Endothelial cell of umbilical vein (primary cell): ENCODE measurements at regions of chr1 and their contacts with region 1.

Region 1: DNA sequence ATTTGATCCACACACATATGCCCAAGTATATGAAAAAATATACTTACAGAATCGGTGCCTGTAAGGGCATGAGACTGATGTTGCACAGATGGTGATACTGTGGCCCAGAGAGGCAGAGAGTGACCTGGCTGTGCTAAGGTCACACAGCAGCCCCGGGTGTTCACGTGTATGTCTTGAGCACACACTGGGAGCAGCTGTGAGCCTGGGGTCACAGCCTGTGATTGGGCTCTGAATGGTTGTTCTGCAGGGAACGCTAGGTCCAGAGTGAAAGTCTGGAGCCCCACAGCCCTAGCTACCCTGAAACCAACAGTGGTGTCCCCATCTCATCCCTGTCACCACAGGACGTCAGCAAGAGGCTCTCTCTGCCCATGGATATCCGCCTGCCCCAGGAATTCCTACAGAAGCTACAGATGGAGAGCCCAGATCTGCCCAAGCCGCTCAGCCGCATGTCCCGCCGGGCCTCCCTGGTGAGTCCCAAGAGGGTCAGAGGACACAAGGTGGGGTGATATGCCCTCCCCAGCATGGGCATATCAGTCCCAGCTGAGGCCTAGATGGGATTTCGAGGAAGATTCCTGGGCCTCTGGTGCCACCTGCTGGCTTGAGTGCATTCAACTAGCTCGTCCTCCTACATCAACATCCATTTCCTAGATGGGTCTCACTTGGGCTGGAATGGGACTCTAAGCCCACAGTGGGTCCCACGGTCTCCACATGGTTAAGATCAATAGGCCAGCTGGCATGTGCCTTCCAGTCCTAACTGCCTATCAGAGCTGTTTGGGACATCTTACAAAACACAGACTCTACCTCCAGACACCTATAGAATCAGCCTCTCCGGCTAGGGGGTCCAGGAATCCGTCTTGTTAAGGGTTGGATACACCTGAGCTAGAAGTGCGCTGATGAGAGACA is 19.7 kb downstream of the CDK18 start:
- DNase-seq: peak; percentile 62
- H3K4me3 ChIP-seq: no peak overlapping the region
- H3K27ac ChIP-seq: no peak overlapping the region
- H3K4me1 ChIP-seq: no peaks in the 10 kb centered on the region
- H3K27me3 ChIP-seq: peaks cover 0 to 4% of the 10 kb centered on the region in 2 experiments
- CTCF ChIP-seq: peak; percentile 70 to 80
- POLR2A ChIP-seq: no peak

Region 2: DNA sequence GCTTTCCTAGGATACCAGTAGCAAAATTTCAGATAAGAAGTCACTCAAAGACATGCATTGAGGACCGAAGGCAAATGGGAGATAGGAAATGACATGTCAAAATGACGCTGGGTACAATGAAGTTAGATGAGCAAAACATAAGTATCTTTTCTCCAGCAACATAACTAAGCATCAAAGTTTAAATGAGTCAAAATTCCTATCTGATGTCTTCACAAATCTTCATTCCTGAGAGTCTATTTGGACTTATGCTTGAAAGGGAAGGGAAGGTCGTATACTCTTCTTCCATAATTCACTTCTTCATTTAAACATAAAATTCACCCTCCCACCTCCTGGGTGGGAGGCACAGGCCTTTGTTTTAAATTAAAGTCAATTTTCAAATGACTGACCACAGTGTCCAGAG is 435.8 kb before region 1 on chr1:
- CTCF ChIA-PET with region 1: no interaction called
- POLR2A ChIA-PET with region 1: no interaction called
- dilution Hi-C with region 1: no loop called
- intact Hi-C with region 1: no loop called
- DNase-seq: no peak
- H3K4me3 ChIP-seq: no peak overlapping the region
- H3K27ac ChIP-seq: no peak overlapping the region
- H3K4me1 ChIP-seq: no peaks in the 10 kb centered on the region
- H3K27me3 ChIP-seq: no peaks in the 10 kb centered on the region
- CTCF ChIP-seq: no peak
- POLR2A ChIP-seq: no peak

Region 3: DNA sequence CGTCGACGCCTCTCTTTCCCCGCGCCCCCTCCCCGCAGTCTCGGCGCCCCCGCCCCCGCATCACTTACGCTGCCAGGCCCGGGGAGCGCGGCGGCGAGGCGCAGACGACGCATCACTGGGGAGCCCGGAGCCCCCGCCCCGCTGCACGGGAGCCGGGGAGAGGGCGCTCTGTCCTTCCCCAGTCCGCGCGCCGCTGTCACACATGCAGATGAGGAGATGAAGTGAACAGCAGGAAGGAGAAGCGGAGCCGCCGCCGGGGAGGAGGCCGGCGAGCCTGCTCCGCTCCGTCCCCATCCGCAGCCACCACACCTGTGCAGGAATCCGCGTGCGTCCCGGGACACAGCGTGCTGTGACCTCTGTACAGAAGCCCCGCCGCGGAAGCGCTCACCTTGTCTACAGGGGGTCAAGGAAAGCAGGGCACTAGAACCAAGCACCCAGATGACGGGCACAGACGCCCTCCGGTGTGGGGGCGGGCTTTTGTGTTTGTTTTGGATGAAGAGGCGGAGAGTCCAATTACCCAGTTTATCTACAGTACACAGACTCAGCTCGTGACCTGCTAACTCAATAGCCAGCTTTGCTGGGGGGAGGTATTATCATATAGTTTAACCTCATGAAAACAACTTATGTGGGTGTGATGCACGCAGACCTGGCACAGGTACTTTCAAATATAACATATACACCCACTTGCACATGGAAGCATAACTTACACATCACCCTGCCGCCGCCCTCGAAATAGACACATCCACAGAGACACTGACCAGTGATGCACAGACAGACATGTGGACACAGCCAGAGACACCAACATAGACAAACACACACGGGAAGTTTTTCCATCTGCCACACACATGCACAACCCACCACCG is 179.8 kb before region 1 on chr1:
- CTCF ChIA-PET with region 1: interaction called, 24 read pairs
- POLR2A ChIA-PET with region 1: no interaction called
- dilution Hi-C with region 1: no loop called
- intact Hi-C with region 1: no loop called
- DNase-seq: no peak
- H3K4me3 ChIP-seq: no peak overlapping the region
- H3K27ac ChIP-seq: no peak overlapping the region
- H3K4me1 ChIP-seq: no peaks in the 10 kb centered on the region
- H3K27me3 ChIP-seq: peaks cover 53 to 70% of the 10 kb centered on the region in 2 experiments
- CTCF ChIP-seq: no peak
- POLR2A ChIP-seq: no peak

Region 4: GRCh38 chr1:205430696-205431305 is 93.3 kb before region 1 on chr1:
- CTCF ChIA-PET with region 1: interaction called, 11 read pairs
- POLR2A ChIA-PET with region 1: no interaction called
- dilution Hi-C with region 1: no loop called
- intact Hi-C with region 1: loop called (anchors 5 kb)
- DNase-seq: peak; percentile 59
- H3K4me3 ChIP-seq: peak overlapping the region; percentile 18 to 51 (median 34)
- H3K27ac ChIP-seq: no peak overlapping the region
- H3K4me1 ChIP-seq: no peaks in the 10 kb centered on the region
- H3K27me3 ChIP-seq: peaks cover 12 to 19% of the 10 kb centered on the region in 2 experiments
- CTCF ChIP-seq: peak; percentile 67 to 79
- POLR2A ChIP-seq: no peak

Region 5: GRCh38 chr1:205505791-205506190 is 18.4 kb before region 1 on chr1:
- CTCF ChIA-PET with region 1: interaction called, 13 read pairs
- POLR2A ChIA-PET with region 1: no interaction called
- dilution Hi-C with region 1: no loop called
- intact Hi-C with region 1: no loop called
- DNase-seq: no peak
- H3K4me3 ChIP-seq: no peak overlapping the region
- H3K27ac ChIP-seq: no peak overlapping the region
- H3K4me1 ChIP-seq: no peaks in the 10 kb centered on the region
- H3K27me3 ChIP-seq: peaks cover 29 to 35% of the 10 kb centered on the region in 2 experiments
- CTCF ChIP-seq: no peak
- POLR2A ChIP-seq: no peak

Region 6: DNA sequence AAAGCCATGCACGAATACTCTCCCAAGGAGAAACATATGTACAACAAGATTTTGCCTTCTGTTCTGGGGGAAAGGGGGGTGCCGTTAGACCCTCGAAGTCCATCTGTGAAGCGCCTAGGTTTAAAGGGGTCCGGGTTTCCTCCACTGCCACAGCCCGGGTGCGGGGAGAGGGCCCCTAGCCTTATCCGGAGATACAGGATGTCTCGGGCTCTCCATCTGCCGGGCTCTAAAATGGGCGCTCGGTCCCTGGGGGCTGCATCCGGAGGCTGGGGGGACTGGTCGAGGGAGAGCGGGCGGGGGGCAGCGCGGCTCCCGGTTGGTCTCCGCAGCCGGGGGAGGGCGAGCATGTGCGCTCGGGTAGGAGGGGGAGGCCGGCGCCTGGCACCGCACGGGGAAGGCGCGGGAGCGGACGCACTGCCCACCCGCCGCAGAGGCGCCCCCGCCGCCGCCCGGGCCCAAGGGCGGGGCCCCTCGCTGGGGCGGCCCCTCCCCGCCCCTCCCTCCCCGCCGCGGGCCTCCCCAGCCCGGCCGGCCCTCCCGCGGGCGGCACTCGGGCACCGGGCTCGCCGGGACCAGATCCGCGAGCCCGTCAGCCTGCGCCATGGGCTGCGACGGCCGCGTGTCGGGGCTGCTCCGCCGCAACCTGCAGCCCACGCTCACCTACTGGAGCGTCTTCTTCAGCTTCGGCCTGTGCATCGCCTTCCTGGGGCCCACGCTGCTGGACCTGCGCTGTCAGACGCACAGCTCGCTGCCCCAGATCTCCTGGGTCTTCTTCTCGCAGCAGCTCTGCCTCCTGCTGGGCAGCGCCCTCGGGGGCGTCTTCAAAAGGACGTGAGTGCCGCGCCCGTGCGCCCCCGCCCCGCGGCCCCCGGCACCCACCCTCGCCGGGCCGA is 44.6 kb after region 1 on chr1:
- CTCF ChIA-PET with region 1: interaction called, 19 read pairs
- POLR2A ChIA-PET with region 1: no interaction called
- dilution Hi-C with region 1: no loop called
- intact Hi-C with region 1: no loop called
- DNase-seq: no peak
- H3K4me3 ChIP-seq: no peak overlapping the region
- H3K27ac ChIP-seq: no peak overlapping the region
- H3K4me1 ChIP-seq: no peaks in the 10 kb centered on the region
- H3K27me3 ChIP-seq: peaks cover 51 to 67% of the 10 kb centered on the region in 2 experiments
- CTCF ChIP-seq: peak in 1 of 2 donors; percentile 37
- POLR2A ChIP-seq: no peak